ENCODE measurements at regions of chr3 and their contacts with region 1.

Region 1: DNA sequence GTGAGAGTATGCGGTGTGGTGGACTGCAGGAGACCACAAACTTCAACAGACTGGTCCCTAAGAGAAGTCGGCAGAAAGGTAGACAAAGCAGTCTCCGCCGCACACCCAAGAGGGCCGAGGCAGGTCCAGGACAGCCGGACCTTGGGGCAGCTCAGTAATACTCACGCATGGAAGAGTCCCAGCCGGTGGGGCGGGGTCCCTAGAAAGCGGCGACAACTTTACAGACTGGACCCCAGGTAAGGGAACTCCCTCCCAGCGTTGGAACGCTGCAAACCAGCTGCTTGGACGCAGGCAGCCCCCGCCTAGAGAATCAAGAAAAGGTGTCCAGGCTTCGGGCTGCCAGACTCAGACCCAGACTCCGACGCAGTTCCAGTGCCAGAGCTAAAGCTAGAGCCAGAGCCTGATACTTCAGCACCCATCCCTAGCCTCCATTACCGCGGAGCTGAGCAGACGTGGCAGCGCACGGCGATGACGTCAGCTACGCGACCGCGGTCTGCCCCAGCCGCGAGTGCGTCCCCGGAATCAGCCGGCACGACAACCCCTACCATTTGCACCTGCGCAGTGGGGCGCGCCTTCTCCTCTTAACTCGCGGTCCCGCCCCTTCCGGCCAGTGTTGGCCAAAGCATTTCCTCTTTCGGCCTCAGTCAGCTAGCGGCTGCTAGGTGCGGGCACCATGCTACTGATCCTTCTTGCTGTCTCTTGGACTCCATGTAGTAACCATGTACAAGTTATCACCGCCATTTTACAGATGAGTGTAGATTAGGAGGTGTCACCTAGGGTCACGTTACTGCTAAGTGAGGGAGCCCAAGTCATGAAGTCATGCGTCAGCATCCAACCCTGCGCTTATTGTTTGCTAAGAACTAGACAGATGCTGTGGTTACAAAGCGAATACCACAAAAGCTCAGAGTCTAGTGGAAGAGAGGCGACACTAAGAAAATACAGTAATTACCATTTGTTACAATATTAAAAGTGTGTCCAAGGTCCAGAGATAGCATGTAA is at the start of gene TMEM39A:
- DNase-seq: peak; percentile 100
- H3K4me3 Mint-ChIP-seq: peak within 1 kb of the TSS; percentile 99
- H3K27ac Mint-ChIP-seq: peak within 1 kb of the TSS; percentile 96
- H3K4me1 Mint-ChIP-seq: peaks cover 30% of the 10 kb centered on the region
- H3K27me3 Mint-ChIP-seq: peaks cover 2% of the 10 kb centered on the region
- total RNA-seq, gene TMEM39A: 44.0 and 52.2 TPM in 2 replicates

Region 2: GRCh38 chr3:118292841-118293240 is 1170.6 kb before region 1 on chr3:
- intact Hi-C with region 1: no loop called
- DNase-seq: no peak
- H3K4me3 Mint-ChIP-seq: no peak overlapping the region
- H3K27ac Mint-ChIP-seq: no peak overlapping the region
- H3K4me1 Mint-ChIP-seq: no peaks in the 10 kb centered on the region
- H3K27me3 Mint-ChIP-seq: no peaks in the 10 kb centered on the region

Region 3: DNA sequence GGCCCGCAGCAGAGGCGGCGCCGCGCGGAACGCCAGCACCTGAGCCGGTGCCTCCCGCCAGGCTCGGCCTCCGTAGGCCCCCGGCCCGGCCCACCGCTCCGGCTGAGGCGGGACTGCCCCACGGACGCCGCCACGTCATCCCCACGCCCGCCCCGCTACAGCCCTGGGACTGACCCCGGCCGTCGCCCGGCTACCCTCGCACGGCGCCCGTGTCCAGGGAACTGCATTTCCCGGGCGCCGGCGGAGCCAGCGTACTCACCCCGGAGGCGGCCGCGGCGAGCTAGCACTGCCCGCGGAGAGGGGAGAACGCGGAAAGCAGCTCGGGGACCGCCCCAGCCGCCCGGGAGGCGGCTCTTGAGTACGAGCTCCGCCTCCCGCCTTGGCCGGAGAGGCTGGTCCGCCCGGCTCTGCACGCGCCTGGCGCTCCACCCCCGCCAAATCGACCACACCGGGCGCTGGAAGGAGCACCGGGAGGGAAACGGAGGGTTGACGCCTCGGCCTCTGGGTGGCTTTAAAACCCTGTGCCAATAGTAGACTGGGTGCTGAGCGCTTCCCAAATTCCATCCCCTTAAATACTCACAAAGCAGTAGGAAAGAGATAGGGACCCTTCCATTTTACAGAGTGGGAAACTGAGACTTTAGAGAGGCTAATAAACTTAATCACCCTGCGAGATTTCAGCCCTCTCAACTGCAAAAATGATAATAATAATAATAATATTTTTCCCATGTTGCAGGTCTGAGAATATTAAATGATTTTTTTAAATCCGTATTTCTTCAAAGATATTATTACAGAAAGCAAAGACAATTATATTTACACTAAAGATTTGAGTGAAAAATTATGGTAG is 222.7 kb before region 1 on chr3 and contains the start of gene B4GALT4:
- intact Hi-C with region 1: loop called (anchors 2 kb)
- DNase-seq: peak; percentile 94
- H3K4me3 Mint-ChIP-seq: peak within 1 kb of the TSS; percentile 88
- H3K27ac Mint-ChIP-seq: peak within 1 kb of the TSS; percentile 82
- H3K4me1 Mint-ChIP-seq: peaks cover 34% of the 10 kb centered on the region
- H3K27me3 Mint-ChIP-seq: no peaks in the 10 kb centered on the region
- total RNA-seq, gene B4GALT4: 14.8 and 15.5 TPM in 2 replicates

Region 4: GRCh38 chr3:119279101-119279554 is 184.3 kb before region 1 on chr3:
- intact Hi-C with region 1: loop called (anchors 5 kb)
- DNase-seq: no peak
- H3K4me3 Mint-ChIP-seq: no peak overlapping the region
- H3K27ac Mint-ChIP-seq: no peak overlapping the region
- H3K4me1 Mint-ChIP-seq: peaks cover 7% of the 10 kb centered on the region
- H3K27me3 Mint-ChIP-seq: peaks cover 5% of the 10 kb centered on the region

Region 5: DNA sequence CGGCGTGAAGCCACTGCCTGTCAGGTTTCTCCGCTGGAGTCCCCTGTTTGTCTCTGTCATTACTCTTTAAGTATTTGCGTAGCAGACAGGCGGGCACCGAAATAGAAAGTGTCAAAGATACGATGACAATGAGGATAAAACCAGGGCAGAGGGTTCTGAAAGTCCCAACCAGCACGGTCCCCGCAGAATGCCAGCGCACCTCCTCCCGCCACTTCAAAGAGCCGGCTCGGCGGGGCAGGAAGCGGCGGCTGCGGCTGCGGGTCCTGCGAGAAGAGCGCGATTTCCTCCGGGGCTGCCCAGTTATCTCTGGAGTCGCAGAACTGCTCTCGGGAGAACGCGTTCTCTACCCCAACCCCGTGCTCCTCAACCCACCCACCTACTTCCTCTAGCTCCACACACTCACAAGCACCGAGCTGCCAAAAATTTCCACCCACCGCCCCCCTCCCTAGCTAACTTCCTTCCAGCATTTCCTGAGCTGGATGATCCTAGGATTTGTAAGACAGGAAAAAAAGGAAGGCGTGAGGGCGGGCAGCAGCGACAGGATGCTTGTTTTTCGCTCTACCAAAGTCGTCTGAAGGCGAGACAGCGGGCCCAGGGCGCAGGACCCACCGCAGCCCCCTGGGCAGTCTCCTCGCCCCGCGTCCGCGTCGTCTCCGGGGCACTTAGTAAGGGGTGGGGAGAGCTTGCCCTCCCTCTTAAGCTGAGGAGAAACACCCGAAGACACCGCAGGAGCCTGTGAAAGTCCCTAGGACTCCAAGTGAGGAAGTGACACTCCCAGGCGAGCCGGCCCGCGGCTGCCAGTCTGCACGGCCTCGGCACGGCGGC is 169.4 kb before region 1 on chr3 and contains the start of gene ARHGAP31:
- intact Hi-C with region 1: loop called (anchors 1 kb)
- DNase-seq: peak; percentile 95
- H3K4me3 Mint-ChIP-seq: peak within 1 kb of the TSS; percentile 86
- H3K27ac Mint-ChIP-seq: peak within 1 kb of the TSS; percentile 89
- H3K4me1 Mint-ChIP-seq: peaks cover 37% of the 10 kb centered on the region
- H3K27me3 Mint-ChIP-seq: peaks cover 14% of the 10 kb centered on the region
- total RNA-seq, gene ARHGAP31: 9.5 and 11.0 TPM in 2 replicates

Region 6: DNA sequence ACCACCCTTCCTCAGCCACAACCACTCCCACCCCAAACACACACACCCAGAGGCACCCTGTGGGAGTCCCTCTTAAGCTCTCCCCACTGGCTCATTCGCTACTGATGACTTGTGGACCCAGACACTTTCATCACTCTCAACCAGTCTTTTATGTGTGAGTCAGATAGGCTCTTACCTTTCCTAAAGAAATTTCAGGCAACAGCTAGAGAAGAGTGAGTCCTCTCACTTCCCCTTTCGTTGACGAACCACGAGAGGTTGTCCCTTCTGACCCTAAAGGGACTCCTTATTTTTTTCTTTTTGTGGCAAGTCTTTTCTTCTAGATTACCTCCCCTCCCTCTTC is 111.2 kb before region 1 on chr3:
- intact Hi-C with region 1: no loop called
- DNase-seq: peak; percentile 77
- H3K4me3 Mint-ChIP-seq: peak overlapping the region; percentile 17
- H3K27ac Mint-ChIP-seq: peak overlapping the region; percentile 20
- H3K4me1 Mint-ChIP-seq: peaks cover 22% of the 10 kb centered on the region
- H3K27me3 Mint-ChIP-seq: peaks cover 7% of the 10 kb centered on the region

Region 7: DNA sequence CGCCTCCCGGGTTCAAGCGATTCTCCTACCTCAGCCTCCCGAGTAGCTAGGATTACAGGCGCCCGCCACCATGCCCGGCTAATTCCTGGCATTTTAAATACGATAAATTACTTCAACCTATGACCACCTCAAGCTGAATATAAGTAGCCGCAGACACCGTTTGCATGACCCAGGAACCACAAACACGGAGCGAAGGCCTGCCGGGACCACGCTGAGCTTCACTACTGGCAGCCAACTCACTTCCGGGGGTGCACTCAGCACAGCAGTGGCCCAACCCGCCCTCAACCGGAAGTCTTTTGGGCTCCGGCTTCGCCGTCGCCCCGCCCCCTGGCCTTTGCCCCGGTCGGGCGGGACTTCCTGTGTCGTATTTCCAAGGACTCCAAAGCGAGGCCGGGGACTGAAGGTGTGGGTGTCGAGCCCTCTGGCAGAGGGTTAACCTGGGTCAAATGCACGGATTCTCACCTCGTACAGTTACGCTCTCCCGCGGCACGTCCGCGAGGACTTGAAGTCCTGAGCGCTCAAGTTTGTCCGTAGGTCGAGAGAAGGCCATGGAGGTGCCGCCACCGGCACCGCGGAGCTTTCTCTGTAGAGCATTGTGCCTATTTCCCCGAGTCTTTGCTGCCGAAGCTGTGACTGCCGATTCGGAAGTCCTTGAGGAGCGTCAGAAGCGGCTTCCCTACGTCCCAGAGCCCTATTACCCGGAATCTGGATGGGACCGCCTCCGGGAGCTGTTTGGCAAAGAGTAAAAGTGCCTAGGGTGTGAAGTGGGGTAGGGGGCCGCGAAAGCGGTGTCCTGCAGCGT is 34.9 kb after region 1 on chr3 and contains the start of gene TIMMDC1:
- intact Hi-C with region 1: loop called (anchors 1 kb)
- DNase-seq: peak; percentile 99
- H3K4me3 Mint-ChIP-seq: peak within 1 kb of the TSS; percentile 99
- H3K27ac Mint-ChIP-seq: peak within 1 kb of the TSS; percentile 99
- H3K4me1 Mint-ChIP-seq: peaks cover 23% of the 10 kb centered on the region
- H3K27me3 Mint-ChIP-seq: no peaks in the 10 kb centered on the region
- total RNA-seq, gene TIMMDC1: 113 and 117 TPM in 2 replicates

Region 8: GRCh38 chr3:119702530-119703157 is 239.2 kb after region 1 on chr3 and contains the start of gene CFAP91:
- intact Hi-C with region 1: loop called (anchors 2 kb)
- DNase-seq: peak; percentile 94
- H3K4me3 Mint-ChIP-seq: peak within 1 kb of the TSS; percentile 83
- H3K27ac Mint-ChIP-seq: peak within 1 kb of the TSS; percentile 40
- H3K4me1 Mint-ChIP-seq: peaks cover 29% of the 10 kb centered on the region
- H3K27me3 Mint-ChIP-seq: peaks cover 27% of the 10 kb centered on the region
- total RNA-seq, gene CFAP91: 0.26 TPM in 1 of 2 replicates, not detected in the other

Region 9: GRCh38 chr3:120596116-120596852 is 1132.8 kb after region 1 on chr3 and contains the start of gene NDUFB4:
- intact Hi-C with region 1: loop called (anchors 5 kb)
- DNase-seq: peak; percentile 98
- H3K4me3 Mint-ChIP-seq: peak within 1 kb of the TSS; percentile 91
- H3K27ac Mint-ChIP-seq: peak within 1 kb of the TSS; percentile 94
- H3K4me1 Mint-ChIP-seq: peaks cover 15% of the 10 kb centered on the region
- H3K27me3 Mint-ChIP-seq: peaks cover 14% of the 10 kb centered on the region
- total RNA-seq, gene NDUFB4: 116 and 123 TPM in 2 replicates